H1 (cell line): ENCODE measurements at regions of chr6 and their contacts with region 1.

Region 1: GRCh38 chr6:43286980-43287716 is 10.9 kb upstream of the SLC22A7 start:
- DNase-seq: no peak
- H3K4me3 ChIP-seq: no peak overlapping the region
- H3K27ac ChIP-seq: no peak overlapping the region
- H3K4me1 ChIP-seq: peaks cover 0 to 14% (median 9%) of the 10 kb centered on the region in 4 experiments; a peak in 5 of 7 replicates
- H3K27me3 ChIP-seq: peaks cover 0 to 28% (median 19%) of the 10 kb centered on the region in 4 experiments; a peak in 5 of 7 replicates
- CTCF ChIP-seq: peak in 2 of 3 experiments; percentile 63 to 67; a peak in 3 of 4 replicates
- EP300 ChIP-seq: no peak
- POLR2A ChIP-seq: no peak
- RAD21 ChIP-seq: peak; percentile 57 to 68

Region 2: DNA sequence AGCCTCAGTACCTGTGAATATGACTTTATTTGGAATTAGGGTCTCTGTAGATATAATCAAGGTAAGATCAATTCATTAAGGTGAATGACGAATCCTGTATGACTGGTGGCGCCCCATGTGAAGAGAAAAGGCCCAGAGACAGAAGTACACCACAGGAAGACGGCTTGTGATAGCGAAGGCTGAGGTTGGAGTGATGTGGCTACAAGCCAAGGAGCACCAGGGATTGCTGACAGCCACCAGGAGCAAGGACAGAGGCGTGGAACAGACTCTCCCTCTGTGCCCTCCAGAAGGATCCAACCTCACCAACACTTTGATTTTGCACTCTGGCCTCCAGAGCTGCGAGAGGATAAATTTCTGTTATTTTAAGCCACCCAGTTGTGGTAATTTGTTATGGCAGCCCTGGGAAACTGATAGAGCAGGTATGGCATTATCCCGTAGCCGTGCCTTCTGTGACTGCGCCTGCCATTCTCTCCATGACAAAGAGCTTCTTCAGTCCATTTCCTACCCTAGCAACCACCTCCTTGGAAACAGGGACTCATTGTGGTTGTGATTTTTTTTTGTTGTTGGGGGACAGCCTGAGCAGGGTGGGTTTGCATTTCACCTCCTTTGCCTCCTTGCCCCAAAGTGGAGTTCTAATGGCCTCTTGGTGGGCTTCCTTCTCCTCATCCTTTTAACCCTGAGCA is 181.5 kb before region 1 on chr6:
- CTCF ChIA-PET with region 1: no interaction called
- POLR2A ChIA-PET with region 1: no interaction called
- DNase-seq: no peak
- H3K4me3 ChIP-seq: no peak overlapping the region
- H3K27ac ChIP-seq: peak overlapping the region; percentile 67; the same call in 1 of the 2 replicates
- H3K4me1 ChIP-seq: peaks cover 3 to 13% (median 6%) of the 10 kb centered on the region in 4 experiments; a peak in 5 of 7 replicates
- H3K27me3 ChIP-seq: no peaks in the 10 kb centered on the region
- CTCF ChIP-seq: no peak
- EP300 ChIP-seq: no peak
- POLR2A ChIP-seq: no peak
- RAD21 ChIP-seq: no peak

Region 3: GRCh38 chr6:43143235-43144124 is 143.7 kb before region 1 on chr6:
- CTCF ChIA-PET with region 1: no interaction called
- POLR2A ChIA-PET with region 1: no interaction called
- DNase-seq: peak; percentile 89 to 96
- H3K4me3 ChIP-seq: no peak overlapping the region; a peak in 1 of 8 replicates
- H3K27ac ChIP-seq: no peak overlapping the region
- H3K4me1 ChIP-seq: peaks cover 0 to 6% (median 3%) of the 10 kb centered on the region in 4 experiments; a peak in 3 of 7 replicates
- H3K27me3 ChIP-seq: no peaks in the 10 kb centered on the region
- CTCF ChIP-seq: peak; percentile 92 to 99 (median 98)
- EP300 ChIP-seq: no peak; a peak in 1 of 3 replicates
- POLR2A ChIP-seq: 0 out of 3 replicates have a peak, but pooled peaks of 1 of the 2 experiments have one; percentile 36
- RAD21 ChIP-seq: peak; percentile 99 to 100

Region 4: GRCh38 chr6:43228951-43229802 is 58.0 kb before region 1 on chr6 and contains the start of gene DNPH1:
- CTCF ChIA-PET with region 1: interaction called, 13 read pairs
- POLR2A ChIA-PET with region 1: interaction called, 3 read pairs
- DNase-seq: peak; percentile 36 to 94
- H3K4me3 ChIP-seq: peak within 1 kb of the TSS; percentile 56 to 74 (median 58)
- H3K27ac ChIP-seq: no peak within 1 kb of the TSS
- H3K4me1 ChIP-seq: peaks cover 0 to 4% (median 4%) of the 10 kb centered on the region in 4 experiments; a peak in 4 of 7 replicates
- H3K27me3 ChIP-seq: peaks cover 3 to 22% (median 17%) of the 10 kb centered on the region in 4 experiments
- CTCF ChIP-seq: peak in 2 of 3 experiments; percentile 81 to 83; a peak in 3 of 4 replicates
- EP300 ChIP-seq: peak in 1 of 2 experiments; percentile 31; a peak in 1 of 3 replicates
- POLR2A ChIP-seq: peak in 1 of 2 experiments; percentile 84; a peak in 2 of 3 replicates
- RAD21 ChIP-seq: peak; percentile 41 to 64
- total RNA-seq, gene DNPH1: 33.9 and 37.2 TPM in 2 replicates

Region 5: GRCh38 chr6:43269273-43270007 is 17.7 kb before region 1 on chr6:
- CTCF ChIA-PET with region 1: interaction called, 24 read pairs
- POLR2A ChIA-PET with region 1: interaction called, 5 read pairs
- DNase-seq: no peak
- H3K4me3 ChIP-seq: peak overlapping the region; percentile 11 to 54 (median 15); a peak in 6 of 8 replicates
- H3K27ac ChIP-seq: no peak overlapping the region
- H3K4me1 ChIP-seq: peaks cover 3 to 29% (median 19%) of the 10 kb centered on the region in 4 experiments
- H3K27me3 ChIP-seq: peaks cover 4 to 48% (median 39%) of the 10 kb centered on the region in 4 experiments
- CTCF ChIP-seq: no peak
- EP300 ChIP-seq: no peak
- POLR2A ChIP-seq: no peak
- RAD21 ChIP-seq: no peak

Region 6: DNA sequence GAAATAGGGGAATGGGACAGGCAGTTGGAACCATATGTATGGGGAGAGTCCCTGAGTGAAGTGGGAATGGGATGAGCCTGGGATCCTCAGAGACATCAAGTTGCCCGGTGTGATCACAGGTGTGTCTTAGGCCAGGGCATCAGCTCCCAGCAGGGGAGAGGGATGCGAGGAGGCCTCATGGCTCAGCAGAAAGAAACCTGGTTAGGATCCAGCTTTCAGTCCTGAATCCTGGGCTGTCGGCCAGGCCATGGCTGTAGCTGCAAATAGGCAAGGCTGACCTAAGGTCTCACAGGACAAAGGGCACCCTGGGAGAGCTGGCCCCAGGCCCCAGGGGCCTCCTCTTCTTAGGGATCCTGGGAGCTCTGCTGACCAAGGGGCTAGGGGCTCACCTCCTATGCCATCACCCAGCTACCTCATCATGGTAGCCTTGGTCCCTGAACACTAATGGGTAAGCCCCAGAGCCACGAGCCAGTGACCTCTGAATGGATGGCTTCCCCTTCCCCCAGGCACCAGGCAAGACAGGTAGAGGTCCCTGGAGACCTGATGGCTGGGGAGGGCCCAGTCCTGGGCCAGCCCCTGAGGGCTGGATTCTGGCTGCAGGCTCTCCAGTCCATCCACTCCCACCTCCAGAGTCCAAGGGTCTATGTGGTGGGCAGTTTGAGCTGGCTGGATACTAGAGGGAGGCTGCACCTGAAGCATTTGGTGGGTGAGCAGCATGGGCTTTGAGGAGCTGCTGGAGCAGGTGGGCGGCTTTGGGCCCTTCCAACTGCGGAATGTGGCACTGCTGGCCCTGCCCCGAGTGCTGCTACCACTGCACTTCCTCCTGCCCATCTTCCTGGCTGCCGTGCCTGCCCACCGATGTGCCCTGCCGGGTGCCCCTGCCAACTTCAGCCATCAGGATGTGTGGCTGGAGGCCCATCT is 10.8 kb after region 1 on chr6 and contains the start of gene SLC22A7:
- CTCF ChIA-PET with region 1: interaction called, 50 read pairs
- POLR2A ChIA-PET with region 1: interaction called, 16 read pairs
- DNase-seq: no peak
- H3K4me3 ChIP-seq: no peak within 1 kb of the TSS
- H3K27ac ChIP-seq: no peak within 1 kb of the TSS
- H3K4me1 ChIP-seq: no peaks in the 10 kb centered on the region
- H3K27me3 ChIP-seq: peaks cover 0 to 2% (median 0%) of the 10 kb centered on the region in 4 experiments; a peak in 1 of 7 replicates
- CTCF ChIP-seq: no peak
- EP300 ChIP-seq: no peak
- POLR2A ChIP-seq: no peak
- RAD21 ChIP-seq: no peak
- total RNA-seq, gene SLC22A7: not detected in 2 replicates

Region 7: GRCh38 chr6:43334466-43335095 is 47.4 kb after region 1 on chr6:
- CTCF ChIA-PET with region 1: interaction called, 16 read pairs
- POLR2A ChIA-PET with region 1: no interaction called
- DNase-seq: peak in 1 of 2 experiments; percentile 21
- H3K4me3 ChIP-seq: no peak overlapping the region
- H3K27ac ChIP-seq: no peak overlapping the region
- H3K4me1 ChIP-seq: no peaks in the 10 kb centered on the region; a peak in 1 of 7 replicates
- H3K27me3 ChIP-seq: no peaks in the 10 kb centered on the region
- CTCF ChIP-seq: peak in 2 of 3 experiments; percentile 68 to 74; a peak in 3 of 4 replicates
- EP300 ChIP-seq: no peak
- POLR2A ChIP-seq: no peak
- RAD21 ChIP-seq: peak; percentile 70 to 76